Vagina (tissue), 2 donors: ENCODE measurements at regions of chr6 and their contacts with region 1.

Region 1: GRCh38 chr6:116511404-116512110 is at the start of gene CALHM5:
- DNase-seq: no peak
- H3K4me3 ChIP-seq: peak within 1 kb of the TSS; percentile 37 to 43
- H3K27ac ChIP-seq: peak within 1 kb of the TSS; percentile 82
- H3K4me1 ChIP-seq: peaks cover 21% of the 10 kb centered on the region
- H3K27me3 ChIP-seq: no peaks in the 10 kb centered on the region
- CTCF ChIP-seq: peak; percentile 21 to 60 (median 51)
- POLR2A ChIP-seq: peak in 1 of 2 donors; percentile 7
- total RNA-seq, gene CALHM5: 2.2 TPM

Region 2: DNA sequence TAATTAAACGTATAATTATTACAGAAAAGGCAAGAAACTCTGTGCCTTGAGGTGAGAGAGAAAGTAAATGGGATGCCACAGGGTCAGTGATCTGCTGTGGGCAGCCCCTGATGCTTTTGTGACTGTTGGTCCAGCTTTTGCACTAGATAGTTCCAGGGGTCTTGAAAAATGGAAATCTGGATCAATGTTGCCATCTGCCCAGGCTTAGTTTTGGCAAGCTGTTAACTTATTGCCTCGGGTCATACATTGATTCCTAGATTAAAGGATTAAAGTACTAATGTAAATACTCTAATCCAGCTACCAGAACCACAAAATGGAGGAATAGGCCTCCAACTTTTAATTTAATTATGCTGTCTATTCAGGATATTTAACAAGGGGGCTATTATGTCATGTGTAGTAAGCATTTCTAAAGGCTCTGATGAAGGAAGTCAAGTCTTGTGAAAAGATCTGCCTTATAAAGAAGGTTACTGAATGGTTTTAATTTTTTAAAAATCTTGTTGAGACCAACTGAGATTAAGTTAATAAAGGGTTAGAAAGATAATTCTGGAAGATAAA is 1792.8 kb before region 1 on chr6:
- intact Hi-C with region 1: no loop called
- DNase-seq: no peak
- H3K4me3 ChIP-seq: no peak overlapping the region
- H3K27ac ChIP-seq: no peak overlapping the region
- H3K4me1 ChIP-seq: no peaks in the 10 kb centered on the region
- H3K27me3 ChIP-seq: no peaks in the 10 kb centered on the region
- CTCF ChIP-seq: no peak
- POLR2A ChIP-seq: no peak

Region 3: DNA sequence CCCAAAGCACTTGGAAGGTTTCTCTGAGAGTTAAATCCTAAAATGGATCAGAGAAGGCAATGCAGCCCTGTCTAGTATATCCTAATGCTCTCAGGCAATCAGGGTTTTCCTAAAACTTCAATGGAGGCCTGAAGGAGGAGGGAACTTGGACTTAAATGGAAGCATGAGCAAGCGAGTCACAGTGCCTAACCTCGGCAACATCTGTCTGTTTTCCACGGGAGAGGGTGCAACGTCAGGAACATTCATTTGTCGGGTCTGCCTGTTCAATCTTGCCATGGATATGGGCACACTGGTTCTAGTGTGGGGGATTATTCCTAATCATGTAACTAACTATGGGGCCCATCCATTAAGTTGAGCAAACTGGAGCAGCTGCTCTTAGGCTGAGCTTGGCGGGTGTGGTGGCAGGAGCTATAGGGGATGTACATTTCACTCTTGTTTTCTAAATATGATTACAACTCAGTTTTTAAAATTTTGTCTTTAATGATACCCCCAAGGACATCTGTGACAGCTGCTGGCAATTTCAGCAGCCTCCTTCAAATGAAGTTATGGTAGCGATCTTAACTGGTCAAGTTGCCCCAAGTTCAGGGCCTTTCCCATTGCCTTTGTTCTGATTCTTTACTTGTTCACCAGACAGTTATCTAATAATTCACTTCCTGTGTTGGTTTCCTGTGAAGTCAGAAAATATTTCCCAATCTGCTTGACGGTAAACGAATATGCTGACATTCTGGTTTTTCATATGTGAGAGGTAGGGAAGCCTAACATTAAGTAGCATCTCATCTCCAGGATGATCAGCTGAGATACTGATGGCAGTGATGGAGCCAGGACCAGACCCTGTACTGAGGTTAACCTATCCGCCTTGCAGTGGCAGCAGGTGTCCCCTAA is 119.2 kb before region 1 on chr6:
- intact Hi-C with region 1: loop called (anchors 5 kb)
- DNase-seq: no peak
- H3K4me3 ChIP-seq: no peak overlapping the region
- H3K27ac ChIP-seq: no peak overlapping the region
- H3K4me1 ChIP-seq: peaks cover 41% of the 10 kb centered on the region
- H3K27me3 ChIP-seq: no peaks in the 10 kb centered on the region
- CTCF ChIP-seq: no peak
- POLR2A ChIP-seq: no peak